T-cell (primary cell): ENCODE measurements at regions of chr12 and their contacts with region 1.

Region 1: GRCh38 chr12:68831272-68831671 is 23.3 kb downstream of the MDM2 start:
- DNase-seq: no peak
- ATAC-seq: no peak
- H3K4me3 ChIP-seq: no peak overlapping the region
- H3K4me3 Mint-ChIP-seq: no peak overlapping the region
- H3K27ac ChIP-seq: no peak overlapping the region
- H3K27ac Mint-ChIP-seq: no peak overlapping the region
- H3K4me1 ChIP-seq: no peaks in the 10 kb centered on the region
- H3K4me1 Mint-ChIP-seq: peaks cover 14 to 19% (median 18%) of the 10 kb centered on the region in 3 donors
- H3K27me3 ChIP-seq: no peaks in the 10 kb centered on the region
- H3K27me3 Mint-ChIP-seq: no peaks in the 10 kb centered on the region

Region 2: DNA sequence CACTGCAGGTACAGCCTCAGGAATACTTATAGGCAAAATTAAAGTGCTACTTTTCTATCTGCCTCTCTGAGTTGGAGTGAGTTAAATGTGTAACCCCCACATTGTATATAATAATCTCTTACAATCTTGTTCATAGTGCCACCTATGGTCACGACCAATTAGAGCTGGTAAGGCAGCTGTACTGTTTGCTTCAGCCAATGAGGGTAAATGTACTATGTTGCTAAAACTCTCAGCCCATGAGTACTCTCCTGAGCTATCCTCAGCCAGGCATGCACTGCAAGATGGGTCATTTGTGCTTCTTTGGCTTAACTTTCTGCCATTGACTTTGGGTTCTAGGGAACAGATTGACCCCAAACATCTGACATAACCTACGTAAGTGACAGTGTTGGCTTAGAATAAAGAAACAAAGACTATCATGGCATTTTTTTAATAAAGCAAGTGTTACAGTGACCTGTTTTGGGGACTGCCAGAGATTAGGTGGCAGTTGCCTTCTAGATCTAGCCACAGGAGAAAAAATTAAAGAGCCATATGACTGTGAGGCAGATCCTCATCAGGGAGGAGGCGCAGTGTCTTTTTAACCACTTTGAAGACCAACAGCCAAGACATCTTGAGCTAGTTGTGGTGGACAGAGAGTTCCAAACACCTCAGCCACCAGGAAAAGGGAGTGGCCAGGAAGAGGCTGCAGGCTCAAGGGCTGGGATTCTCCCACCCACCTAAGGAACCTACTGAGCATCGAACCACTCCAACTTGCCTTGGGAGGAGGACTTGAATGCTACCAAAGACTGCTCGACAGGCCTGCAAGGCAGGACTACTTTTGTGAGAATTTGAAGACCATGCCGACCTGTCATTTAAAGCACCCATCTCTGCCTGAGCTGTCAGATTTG is 38.1 kb before region 1 on chr12:
- CTCF ChIA-PET with region 1: no interaction called
- POLR2A ChIA-PET with region 1: no interaction called
- DNase-seq: peak in 16 of 35 experiments; percentile 2 to 60 (median 15)
- ATAC-seq: peak; percentile 58 to 92 (median 72)
- H3K4me3 ChIP-seq: no peak overlapping the region
- H3K4me3 Mint-ChIP-seq: no peak overlapping the region
- H3K27ac ChIP-seq: no peak overlapping the region
- H3K27ac Mint-ChIP-seq: no peak overlapping the region
- H3K4me1 ChIP-seq: no peaks in the 10 kb centered on the region
- H3K4me1 Mint-ChIP-seq: peaks cover 0 to 5% (median 0%) of the 10 kb centered on the region in 3 donors
- H3K27me3 ChIP-seq: no peaks in the 10 kb centered on the region
- H3K27me3 Mint-ChIP-seq: no peaks in the 10 kb centered on the region

Region 3: DNA sequence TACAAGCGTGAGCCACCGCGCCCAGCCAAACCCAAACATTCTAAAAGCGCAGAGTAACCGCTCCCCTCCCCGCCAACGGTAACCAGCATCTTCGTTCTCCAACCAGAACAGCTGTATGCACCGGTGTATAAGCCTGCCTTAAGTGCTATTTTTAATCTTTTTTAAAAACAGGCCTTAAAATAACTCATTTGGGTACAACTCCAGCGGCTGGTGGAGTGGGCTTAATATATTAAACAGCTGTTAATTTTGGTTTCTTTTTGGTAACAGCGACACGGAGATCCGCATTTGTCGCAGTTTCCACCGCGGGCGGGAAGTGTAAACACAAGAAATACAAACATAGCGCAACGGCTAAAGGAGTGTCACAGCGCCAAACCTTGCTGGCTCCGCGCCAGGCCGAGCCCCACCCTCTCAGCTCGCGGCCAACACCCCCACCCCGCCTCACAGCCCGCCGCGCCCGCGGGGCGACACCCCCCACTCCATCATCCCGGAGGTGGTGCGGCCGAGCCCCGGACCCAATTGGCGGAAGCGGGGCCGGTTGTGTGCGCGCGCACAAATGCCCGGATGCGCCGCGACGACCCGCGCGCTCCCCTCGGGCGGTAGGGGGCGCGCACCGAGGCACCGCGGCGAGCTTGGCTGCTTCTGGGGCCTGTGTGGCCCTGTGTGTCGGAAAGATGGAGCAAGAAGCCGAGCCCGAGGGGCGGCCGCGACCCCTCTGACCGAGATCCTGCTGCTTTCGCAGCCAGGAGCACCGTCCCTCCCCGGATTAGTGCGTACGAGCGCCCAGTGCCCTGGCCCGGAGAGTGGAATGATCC is 23.5 kb before region 1 on chr12 and contains the start of gene MDM2:
- CTCF ChIA-PET with region 1: interaction called, 5 to 18 read pairs
- POLR2A ChIA-PET with region 1: interaction called, 3 read pairs
- DNase-seq: peak; percentile 93 to 99 (median 97)
- ATAC-seq: peak; percentile 90 to 95 (median 93)
- H3K4me3 ChIP-seq: peak within 1 kb of the TSS; percentile 79 to 82
- H3K4me3 Mint-ChIP-seq: peak within 1 kb of the TSS; percentile 91 to 97 (median 95)
- H3K27ac ChIP-seq: peak within 1 kb of the TSS; percentile 94
- H3K27ac Mint-ChIP-seq: peak within 1 kb of the TSS; percentile 98 to 99
- H3K4me1 ChIP-seq: peaks cover 3 to 22% of the 10 kb centered on the region in 2 experiments
- H3K4me1 Mint-ChIP-seq: peaks cover 26 to 39% (median 34%) of the 10 kb centered on the region in 3 donors
- H3K27me3 ChIP-seq: no peaks in the 10 kb centered on the region
- H3K27me3 Mint-ChIP-seq: no peaks in the 10 kb centered on the region
- total RNA-seq, gene MDM2: 75.3 to 96.6 (median 84.4) TPM

Region 4: DNA sequence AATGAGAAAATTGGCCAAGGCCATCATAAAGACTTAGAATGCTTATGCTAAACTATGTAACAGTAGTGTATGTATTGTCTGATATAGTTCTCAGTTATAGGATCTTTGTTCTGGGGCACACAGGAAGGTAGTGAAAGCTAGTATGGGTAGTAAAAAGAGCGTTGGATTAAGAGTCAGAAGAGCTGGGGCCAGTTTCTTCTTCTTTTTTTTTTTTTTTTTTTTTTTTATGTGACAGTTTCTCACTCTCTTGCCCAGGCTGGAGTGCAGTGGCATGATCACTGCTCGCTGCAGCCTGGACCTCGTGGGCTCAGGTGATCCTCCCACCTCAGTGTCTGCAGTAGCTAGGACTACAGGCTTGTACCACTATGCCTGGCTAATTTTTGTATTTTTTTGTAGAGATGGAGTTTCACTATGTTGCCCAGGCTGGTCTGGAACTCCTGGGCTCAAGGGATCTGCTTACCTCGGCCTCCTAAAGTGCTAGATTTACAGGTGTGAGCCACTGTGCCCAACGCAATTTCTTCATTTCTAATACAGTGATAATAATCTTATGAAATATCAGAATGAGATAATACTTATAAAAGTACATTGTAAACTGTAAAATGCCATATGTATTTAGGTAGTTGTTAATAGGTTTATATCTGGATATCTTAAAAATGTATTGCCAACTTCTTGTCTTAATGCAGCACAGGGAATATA is 15.9 kb before region 1 on chr12:
- CTCF ChIA-PET with region 1: interaction called, 7 to 12 read pairs
- POLR2A ChIA-PET with region 1: interaction called, 3 to 5 read pairs
- DNase-seq: no peak
- ATAC-seq: no peak
- H3K4me3 ChIP-seq: no peak overlapping the region
- H3K4me3 Mint-ChIP-seq: no peak overlapping the region
- H3K27ac ChIP-seq: peak overlapping the region; percentile 16
- H3K27ac Mint-ChIP-seq: peak overlapping the region in 1 of 2 donors; percentile 33
- H3K4me1 ChIP-seq: peaks cover 5 to 10% of the 10 kb centered on the region in 2 experiments
- H3K4me1 Mint-ChIP-seq: peaks cover 48 to 59% (median 50%) of the 10 kb centered on the region in 3 donors
- H3K27me3 ChIP-seq: no peaks in the 10 kb centered on the region
- H3K27me3 Mint-ChIP-seq: no peaks in the 10 kb centered on the region

Region 5: GRCh38 chr12:69071091-69071370 is 239.8 kb after region 1 on chr12:
- CTCF ChIA-PET with region 1: interaction called in 1 of 2 experiments, 10 read pairs
- POLR2A ChIA-PET with region 1: no interaction called
- DNase-seq: no peak
- ATAC-seq: no peak
- H3K4me3 ChIP-seq: no peak overlapping the region
- H3K4me3 Mint-ChIP-seq: no peak overlapping the region
- H3K27ac ChIP-seq: no peak overlapping the region
- H3K27ac Mint-ChIP-seq: no peak overlapping the region
- H3K4me1 ChIP-seq: no peaks in the 10 kb centered on the region
- H3K4me1 Mint-ChIP-seq: no peaks in the 10 kb centered on the region
- H3K27me3 ChIP-seq: peaks cover 0 to 3% of the 10 kb centered on the region in 2 experiments
- H3K27me3 Mint-ChIP-seq: peaks cover 10 to 20% of the 10 kb centered on the region in 2 donors